Activated CD4-positive, alpha-beta memory T cell treated with anti-CD3 and anti-CD28 coated beads for 36 hours (primary cell): ENCODE measurements at regions of chr19 and their contacts with region 1.

Region 1: DNA sequence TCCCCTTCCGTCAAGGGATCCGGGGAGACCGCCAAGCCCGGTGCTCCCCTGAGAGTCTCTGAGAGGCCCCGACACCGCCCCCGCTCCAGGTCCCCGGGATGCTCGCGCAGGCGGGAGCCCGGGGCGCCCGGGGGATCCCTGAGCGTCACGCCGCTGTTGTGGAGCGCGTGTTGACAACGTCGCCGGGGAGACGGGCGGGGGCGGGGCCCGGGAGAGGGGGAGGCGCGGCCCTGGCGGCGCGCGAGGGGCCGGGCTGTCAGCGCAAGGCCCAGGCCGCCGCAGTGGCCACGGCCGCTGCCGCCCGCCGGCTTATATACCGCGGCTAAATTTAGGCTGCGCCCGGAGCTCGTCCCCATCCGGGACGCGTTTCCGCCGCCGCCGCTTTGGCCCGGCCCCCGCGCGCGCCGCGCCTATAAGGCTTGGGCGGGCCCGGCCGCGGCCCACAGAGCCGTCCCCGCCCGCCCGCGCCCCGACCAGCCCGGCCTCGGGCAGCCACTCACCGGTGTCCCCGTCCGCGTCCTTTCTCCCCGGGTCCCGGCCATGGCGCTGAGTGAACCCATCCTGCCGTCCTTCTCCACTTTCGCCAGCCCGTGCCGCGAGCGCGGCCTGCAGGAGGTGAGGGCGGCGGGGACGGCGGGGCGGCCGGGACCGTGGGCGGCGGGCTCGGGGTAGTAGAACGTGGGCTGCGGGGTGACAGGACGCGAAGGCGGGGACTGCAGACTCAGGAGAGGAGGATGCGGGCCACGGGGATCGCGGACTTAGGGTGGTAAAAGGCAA is at the start of gene KLF2:
- DNase-seq: peak; percentile 89
- H3K4me3 Mint-ChIP-seq: peak within 1 kb of the TSS; percentile 57
- H3K27ac Mint-ChIP-seq: no peak within 1 kb of the TSS
- H3K4me1 Mint-ChIP-seq: peaks cover 36% of the 10 kb centered on the region
- H3K27me3 Mint-ChIP-seq: peaks cover 19% of the 10 kb centered on the region
- total RNA-seq, gene KLF2: 1.7 TPM

Region 2: GRCh38 chr19:16259385-16260159 is 65.0 kb before region 1 on chr19:
- CTCF ChIA-PET with region 1: interaction called, 3 read pairs
- POLR2A ChIA-PET with region 1: no interaction called
- intact Hi-C with region 1: loop called (anchors 5 kb)
- DNase-seq: no peak
- H3K4me3 Mint-ChIP-seq: no peak overlapping the region
- H3K27ac Mint-ChIP-seq: no peak overlapping the region
- H3K4me1 Mint-ChIP-seq: peaks cover 29% of the 10 kb centered on the region
- H3K27me3 Mint-ChIP-seq: peaks cover 4% of the 10 kb centered on the region

Region 3: DNA sequence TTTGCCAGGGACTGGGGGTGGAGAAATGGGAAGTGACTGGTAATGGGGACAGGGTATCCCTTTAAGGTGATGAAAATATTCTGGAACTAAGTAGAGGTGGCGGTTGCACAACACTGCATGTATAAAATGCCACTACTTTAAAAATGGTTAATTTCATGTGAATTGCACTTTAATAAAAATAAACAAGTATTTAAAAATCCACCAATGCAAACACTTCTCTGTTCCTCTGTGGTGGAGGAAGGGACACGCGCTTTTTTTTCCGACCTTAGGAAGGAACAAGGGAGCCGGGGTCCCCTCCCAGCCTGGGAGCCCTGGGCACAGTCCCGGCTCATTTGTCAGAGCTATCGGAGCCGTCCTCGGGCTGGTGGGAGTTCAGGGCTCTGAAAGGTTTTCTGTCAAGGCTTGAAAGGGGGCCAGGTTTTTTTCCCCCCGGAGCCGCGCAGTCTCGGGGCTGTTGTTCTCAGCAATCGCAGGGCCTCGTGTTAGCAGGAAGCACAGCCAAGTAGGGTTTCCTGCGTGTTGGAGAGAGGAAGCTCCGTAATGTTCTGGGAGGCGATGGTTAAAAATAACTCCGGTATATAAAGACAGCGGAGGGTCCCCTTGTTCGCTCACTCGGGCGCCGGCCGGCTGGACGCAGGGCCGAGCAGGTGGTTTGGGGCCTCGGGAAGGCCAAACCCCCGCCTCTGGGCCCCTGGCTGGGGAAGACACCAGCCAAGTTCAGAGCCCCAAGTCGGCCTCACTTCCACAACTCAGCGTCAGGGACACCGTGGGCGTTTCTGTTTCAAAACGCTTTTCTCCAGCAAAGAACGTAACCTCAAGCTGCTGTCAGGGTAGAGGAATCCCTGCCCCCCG is 41.1 kb before region 1 on chr19:
- CTCF ChIA-PET with region 1: no interaction called
- POLR2A ChIA-PET with region 1: interaction called, 5 read pairs
- intact Hi-C with region 1: loop called (anchors 5 kb)
- DNase-seq: peak; percentile 90
- H3K4me3 Mint-ChIP-seq: peak overlapping the region; percentile 54
- H3K27ac Mint-ChIP-seq: peak overlapping the region; percentile 42
- H3K4me1 Mint-ChIP-seq: peaks cover 18% of the 10 kb centered on the region
- H3K27me3 Mint-ChIP-seq: no peaks in the 10 kb centered on the region

Region 4: DNA sequence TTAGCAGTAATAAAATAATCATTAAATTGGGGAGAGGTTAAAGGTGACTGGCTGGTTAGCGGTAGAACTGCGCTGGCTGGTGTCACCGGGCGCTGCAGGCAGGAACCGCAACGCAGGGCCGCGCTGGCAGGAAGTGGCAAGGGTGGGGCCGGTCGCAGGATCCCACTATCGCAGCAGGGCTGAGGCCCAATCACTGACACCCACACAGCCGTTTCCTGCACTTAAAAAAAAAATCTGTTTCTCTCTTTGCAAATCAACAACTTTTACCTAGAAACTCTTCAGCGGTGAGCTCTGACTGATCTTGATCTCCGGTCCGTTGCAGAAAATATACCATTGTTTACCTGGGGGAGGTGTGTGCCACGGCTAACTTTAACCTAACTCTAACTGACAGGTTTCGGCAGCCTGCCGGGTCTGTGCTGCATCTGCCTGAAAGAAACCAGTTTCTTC is 47.0 kb after region 1 on chr19:
- CTCF ChIA-PET with region 1: interaction called, 12 read pairs
- POLR2A ChIA-PET with region 1: interaction called, 29 read pairs
- intact Hi-C with region 1: loop called (anchors 1 kb)
- DNase-seq: peak; percentile 95
- H3K4me3 Mint-ChIP-seq: peak overlapping the region; percentile 53
- H3K27ac Mint-ChIP-seq: peak overlapping the region; percentile 57
- H3K4me1 Mint-ChIP-seq: peaks cover 40% of the 10 kb centered on the region
- H3K27me3 Mint-ChIP-seq: peaks cover 7% of the 10 kb centered on the region